ENCODE measurements at regions of chr3 and their contacts with region 1.

Region 1: DNA sequence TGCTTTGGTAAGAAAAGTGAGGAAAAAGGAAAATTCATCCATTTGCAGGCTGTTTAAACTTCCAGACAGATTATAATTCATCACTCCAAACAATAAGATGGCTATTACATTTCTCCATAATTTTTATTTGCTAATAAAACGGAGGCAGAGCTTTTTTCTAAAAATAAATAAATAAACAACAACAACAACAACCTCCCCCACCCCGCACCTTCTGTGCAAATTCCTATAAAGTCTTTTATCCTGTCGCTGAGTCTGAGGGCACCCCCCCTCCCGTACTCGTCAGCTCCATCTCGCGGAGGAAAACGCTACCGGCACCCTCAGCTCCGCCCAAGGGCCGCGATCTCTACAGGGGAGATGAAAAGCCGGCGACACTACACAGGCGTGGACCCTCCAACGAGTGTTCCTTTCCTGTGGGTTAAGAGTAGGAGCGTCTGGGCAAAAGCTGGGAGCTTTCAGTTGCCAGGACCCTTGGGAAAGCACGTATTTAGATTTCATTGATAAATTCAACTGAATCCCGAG is 1.0 kb upstream of the ATP1B3 start:
- DNase-seq: peak; percentile 61
- ATAC-seq: peak; percentile 86
- H3K4me3 ChIP-seq: peak overlapping the region; percentile 83 to 98
- H3K27ac ChIP-seq: peak overlapping the region; percentile 77
- H3K4me1 ChIP-seq: peaks cover 10% of the 10 kb centered on the region; the same call in 1 of the 2 replicates
- H3K27me3 ChIP-seq: no peaks in the 10 kb centered on the region
- CTCF ChIP-seq: peak; percentile 98

Region 2: DNA sequence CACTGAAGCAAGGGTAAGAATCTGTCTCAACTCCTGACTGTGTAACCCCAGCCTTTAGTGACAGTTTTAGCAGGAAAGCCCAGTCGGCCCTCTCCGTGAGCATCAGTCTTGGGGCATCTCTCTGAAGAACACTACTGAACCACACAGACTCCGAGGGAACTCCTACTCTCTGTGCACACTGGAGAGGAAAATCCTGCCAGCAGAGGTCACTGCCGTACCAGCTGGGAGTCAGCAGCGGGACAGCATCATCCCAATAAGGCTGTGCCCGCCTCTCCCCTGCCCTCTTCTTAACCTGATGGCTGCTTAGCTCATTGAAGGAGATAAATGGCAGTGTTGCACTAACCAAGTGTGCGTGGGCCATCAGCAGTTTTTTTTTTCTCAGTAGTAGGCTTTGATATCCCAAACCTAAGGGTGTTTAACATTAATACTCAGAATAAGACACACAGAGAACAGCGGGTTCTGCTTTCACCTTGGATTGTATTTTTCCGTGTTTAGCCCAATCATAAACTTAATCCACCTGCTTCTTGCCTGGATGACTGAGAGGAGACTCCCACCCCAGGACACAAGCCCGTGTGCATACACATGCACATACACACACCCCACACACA is 415.2 kb before region 1 on chr3:
- CTCF ChIA-PET with region 1: no interaction called
- POLR2A ChIA-PET with region 1: no interaction called
- in situ Hi-C with region 1: no loop called
- intact Hi-C with region 1: loop called (anchors 10 kb)
- DNase-seq: peak; percentile 73
- ATAC-seq: peak; percentile 99
- H3K4me3 ChIP-seq: no peak overlapping the region
- H3K27ac ChIP-seq: no peak overlapping the region
- H3K4me1 ChIP-seq: no peaks in the 10 kb centered on the region
- H3K27me3 ChIP-seq: no peaks in the 10 kb centered on the region
- CTCF ChIP-seq: peak; percentile 98

Region 3: GRCh38 chr3:141849056-141849815 is 26.2 kb before region 1 on chr3:
- CTCF ChIA-PET with region 1: no interaction called
- POLR2A ChIA-PET with region 1: interaction called, 13 read pairs
- in situ Hi-C with region 1: no loop called
- intact Hi-C with region 1: no loop called
- DNase-seq: no peak
- ATAC-seq: no peak
- H3K4me3 ChIP-seq: no peak overlapping the region
- H3K27ac ChIP-seq: no peak overlapping the region
- H3K4me1 ChIP-seq: no peaks in the 10 kb centered on the region
- H3K27me3 ChIP-seq: no peaks in the 10 kb centered on the region
- CTCF ChIP-seq: no peak

Region 4: GRCh38 chr3:141894524-141895178 is 19.2 kb after region 1 on chr3:
- CTCF ChIA-PET with region 1: interaction called, 3 read pairs
- POLR2A ChIA-PET with region 1: interaction called, 16 read pairs
- in situ Hi-C with region 1: no loop called
- intact Hi-C with region 1: no loop called
- DNase-seq: no peak
- ATAC-seq: peak; percentile 62; the same call in 1 of the 2 replicates
- H3K4me3 ChIP-seq: no peak overlapping the region
- H3K27ac ChIP-seq: no peak overlapping the region
- H3K4me1 ChIP-seq: peaks cover 4% of the 10 kb centered on the region; the same call in 1 of the 2 replicates
- H3K27me3 ChIP-seq: no peaks in the 10 kb centered on the region
- CTCF ChIP-seq: no peak

Region 5: DNA sequence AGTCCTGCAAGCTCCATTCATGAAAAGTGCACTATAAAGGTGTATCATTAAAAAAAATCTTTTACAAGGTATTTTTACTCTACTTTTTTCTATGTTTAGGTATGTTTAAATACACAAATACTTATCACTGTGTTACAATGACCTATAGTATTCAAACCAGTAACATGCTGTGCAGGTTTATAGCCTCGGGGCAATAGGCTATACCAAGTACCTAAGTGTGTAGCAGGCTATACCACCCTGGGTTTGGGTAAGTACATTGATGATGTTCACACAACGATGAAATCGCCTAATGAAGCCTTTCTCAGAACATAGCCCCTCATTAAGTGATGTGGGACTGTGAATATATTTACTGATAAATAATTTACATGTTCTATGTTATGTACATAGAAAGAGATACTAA is 105.7 kb after region 1 on chr3:
- CTCF ChIA-PET with region 1: no interaction called
- POLR2A ChIA-PET with region 1: no interaction called
- in situ Hi-C with region 1: no loop called
- intact Hi-C with region 1: no loop called
- DNase-seq: no peak
- ATAC-seq: 0 out of 2 replicates have a peak, but pooled peaks have one; percentile 51
- H3K4me3 ChIP-seq: no peak overlapping the region
- H3K27ac ChIP-seq: no peak overlapping the region
- H3K4me1 ChIP-seq: peaks cover 9% of the 10 kb centered on the region; the same call in 1 of the 2 replicates
- H3K27me3 ChIP-seq: no peaks in the 10 kb centered on the region
- CTCF ChIP-seq: no peak